ENCODE measurements at regions of chr11 and their contacts with region 1.

Region 1: GRCh38 chr11:63635762-63636465 is 21.7 kb upstream of the PLAAT3 start:
- DNase-seq: peak; percentile 74
- CTCF ChIP-seq: peak; percentile 72

Region 2: GRCh38 chr11:62621567-62622470 is 1014.1 kb before region 1 on chr11 and contains the start of gene B3GAT3:
- CTCF ChIA-PET with region 1: no interaction called
- POLR2A ChIA-PET with region 1: no interaction called
- DNase-seq: peak; percentile 98
- CTCF ChIP-seq: no peak

Region 3: GRCh38 chr11:63490551-63491239 is 145.2 kb before region 1 on chr11 and contains the start of gene PLAAT5:
- CTCF ChIA-PET with region 1: interaction called, 17 read pairs
- POLR2A ChIA-PET with region 1: no interaction called
- DNase-seq: no peak
- CTCF ChIP-seq: no peak

Region 4: DNA sequence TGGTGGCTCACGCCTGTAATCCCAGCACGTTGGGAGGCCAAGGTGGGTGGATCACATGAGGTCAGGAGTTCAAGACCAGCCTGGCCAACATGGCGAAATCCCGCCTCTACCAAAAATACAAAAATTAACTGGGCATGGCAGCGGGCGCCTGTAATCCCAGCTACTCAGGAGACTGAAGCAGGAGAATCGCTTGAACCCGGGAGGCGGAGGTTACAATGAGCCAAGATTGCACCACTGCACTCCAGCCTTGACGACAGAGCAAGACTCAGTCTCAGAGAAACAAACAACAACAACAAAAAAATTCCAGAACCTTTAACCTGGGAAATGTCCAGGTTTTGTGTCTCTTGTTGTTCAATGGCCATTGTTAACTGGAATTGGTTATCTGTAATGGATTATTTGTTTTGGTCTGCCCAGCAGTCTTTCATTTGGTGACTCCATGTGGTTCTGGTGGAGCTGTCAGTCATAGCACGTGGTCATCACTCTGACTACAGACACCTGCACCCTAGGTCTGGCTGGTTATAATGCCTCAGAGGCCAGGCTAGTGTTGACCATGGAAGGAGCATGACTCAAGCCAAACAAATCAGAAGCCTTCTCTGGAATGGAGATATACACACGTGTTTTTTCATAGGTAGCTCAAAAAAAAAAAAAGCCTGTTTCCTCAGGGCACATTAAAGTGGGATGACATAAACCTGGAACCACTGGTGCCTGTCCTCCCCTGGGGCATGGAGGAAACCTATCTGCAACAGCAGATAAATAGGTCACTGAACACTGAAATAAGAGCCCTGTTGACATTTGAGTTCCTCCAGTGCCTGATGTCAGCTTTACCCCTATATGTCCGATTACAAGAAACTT is 13.8 kb before region 1 on chr11:
- CTCF ChIA-PET with region 1: interaction called, 30 read pairs
- POLR2A ChIA-PET with region 1: no interaction called
- DNase-seq: no peak
- CTCF ChIP-seq: no peak

Region 5: DNA sequence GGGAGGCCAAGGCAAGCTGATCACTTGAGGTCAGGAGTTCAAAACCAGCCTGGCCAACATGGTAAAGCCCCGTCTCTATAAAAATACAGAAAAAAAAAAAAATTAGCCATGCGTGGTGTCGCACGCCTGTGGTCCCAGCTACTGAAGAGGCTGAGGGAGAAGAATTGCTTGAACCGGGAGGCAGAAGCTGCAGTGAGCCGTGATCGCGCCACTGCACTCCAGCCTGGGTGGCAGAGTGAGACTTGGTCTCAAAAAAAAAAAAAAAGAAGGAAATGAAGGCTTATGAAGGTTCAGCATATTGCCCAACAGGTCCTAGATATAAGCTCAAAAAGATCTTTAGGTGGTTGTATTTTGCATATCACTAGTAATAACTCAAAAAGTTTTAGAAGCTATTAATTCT is 25.1 kb after region 1 on chr11:
- CTCF ChIA-PET with region 1: interaction called, 13 read pairs
- POLR2A ChIA-PET with region 1: no interaction called
- DNase-seq: no peak
- CTCF ChIP-seq: no peak